ENCODE measurements at regions of chrX and their contacts with region 1.

Region 1: DNA sequence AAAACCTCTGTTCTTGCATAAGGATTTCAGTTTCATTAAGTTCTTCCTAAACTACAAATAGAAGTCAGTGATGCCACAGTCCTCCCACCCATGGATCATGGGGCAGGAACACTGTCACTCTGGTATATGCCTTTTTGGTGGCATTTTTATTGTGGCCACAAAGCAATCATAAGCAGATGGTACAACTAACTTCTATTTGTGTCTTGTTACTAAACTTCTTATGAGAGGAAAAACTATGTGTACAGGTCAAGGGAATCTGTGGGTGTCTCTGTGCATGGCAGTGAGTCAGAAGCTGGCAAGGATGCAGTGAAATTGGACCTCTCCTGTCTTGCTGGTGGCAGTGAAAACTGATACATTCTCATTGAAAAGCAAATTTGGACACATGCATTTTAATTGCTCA is 245.0 kb upstream of the GPC4 start:
- DNase-seq: no peak
- ATAC-seq: peak; percentile 75 to 85 (median 79)
- H3K4me3 ChIP-seq: no peak overlapping the region
- H3K27ac ChIP-seq: peak overlapping the region; percentile 30
- H3K4me1 ChIP-seq: peaks cover 6% of the 10 kb centered on the region
- H3K27me3 ChIP-seq: peaks cover 0 to 14% (median 0%) of the 10 kb centered on the region in 3 donors
- CTCF ChIP-seq: no peak

Region 2: GRCh38 chrX:133475521-133475920 is 184.8 kb before region 1 on chrX:
- intact Hi-C with region 1: loop called in 1 of 2 experiments (anchors 10 kb)
- DNase-seq: no peak
- ATAC-seq: peak in 1 of 4 donors; percentile 54
- H3K4me3 ChIP-seq: no peak overlapping the region
- H3K27ac ChIP-seq: no peak overlapping the region
- H3K4me1 ChIP-seq: no peaks in the 10 kb centered on the region
- H3K27me3 ChIP-seq: peaks cover 0 to 12% (median 0%) of the 10 kb centered on the region in 3 donors
- CTCF ChIP-seq: no peak